ENCODE measurements at regions of chr19 and their contacts with region 1.

Region 1: DNA sequence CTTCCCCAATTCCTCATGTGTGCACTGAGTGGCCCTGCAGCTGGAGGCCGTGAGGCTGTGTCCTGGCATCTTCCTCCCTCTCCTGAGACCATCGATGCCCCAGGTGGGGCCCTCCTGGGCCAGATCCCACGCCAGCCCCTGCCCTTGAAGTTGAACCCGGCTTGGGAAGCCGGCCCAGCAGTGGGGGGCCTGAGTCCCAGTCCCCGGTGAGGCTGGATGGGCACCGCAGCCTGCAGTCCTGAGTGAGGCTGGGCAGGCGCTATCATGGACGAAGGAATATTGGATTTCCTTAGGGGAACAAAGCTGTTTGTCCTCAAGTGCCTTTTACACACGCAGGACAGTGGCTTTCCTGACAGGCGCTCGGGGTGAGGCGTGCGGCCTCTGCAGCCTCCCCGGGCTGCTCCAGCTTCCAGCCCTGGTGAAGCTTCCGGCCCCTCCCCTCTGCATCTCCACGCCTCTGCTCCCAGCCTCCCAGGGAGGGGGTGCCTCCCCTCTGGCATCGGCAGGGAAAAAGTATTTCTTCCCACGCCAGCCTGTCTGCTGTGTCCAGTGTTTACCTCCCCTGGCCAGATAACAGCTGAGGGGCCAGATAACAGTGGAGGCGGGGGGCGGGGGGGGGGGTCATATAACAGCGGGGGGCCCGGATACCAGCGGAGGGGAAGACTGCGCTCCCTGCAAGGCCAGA is 159.5 kb downstream of the KDM4B start:
- DNase-seq: no peak
- ATAC-seq: no peak
- H3K4me3 ChIP-seq: peak overlapping the region in 4 of 5 experiments; percentile 31 to 53 (median 34)
- H3K4me3 Mint-ChIP-seq: peak overlapping the region; percentile 84
- H3K27ac ChIP-seq: peak overlapping the region; percentile 100
- H3K27ac Mint-ChIP-seq: peak overlapping the region; percentile 97
- H3K4me1 ChIP-seq: peaks cover 72 to 85% of the 10 kb centered on the region in 2 donors
- H3K4me1 Mint-ChIP-seq: peaks cover 80% of the 10 kb centered on the region
- H3K27me3 ChIP-seq: no peaks in the 10 kb centered on the region
- H3K27me3 Mint-ChIP-seq: no peaks in the 10 kb centered on the region
- CTCF ChIP-seq: no peak

Region 2: GRCh38 chr19:5018224-5019015 is 110.0 kb before region 1 on chr19:
- CTCF ChIA-PET with region 1: no interaction called
- POLR2A ChIA-PET with region 1: no interaction called
- intact Hi-C with region 1: no loop called
- DNase-seq: no peak
- ATAC-seq: no peak
- H3K4me3 ChIP-seq: no peak overlapping the region
- H3K4me3 Mint-ChIP-seq: no peak overlapping the region
- H3K27ac ChIP-seq: no peak overlapping the region
- H3K27ac Mint-ChIP-seq: no peak overlapping the region
- H3K4me1 ChIP-seq: no peaks in the 10 kb centered on the region
- H3K4me1 Mint-ChIP-seq: peaks cover 5% of the 10 kb centered on the region
- H3K27me3 ChIP-seq: no peaks in the 10 kb centered on the region
- H3K27me3 Mint-ChIP-seq: no peaks in the 10 kb centered on the region
- CTCF ChIP-seq: no peak

Region 3: DNA sequence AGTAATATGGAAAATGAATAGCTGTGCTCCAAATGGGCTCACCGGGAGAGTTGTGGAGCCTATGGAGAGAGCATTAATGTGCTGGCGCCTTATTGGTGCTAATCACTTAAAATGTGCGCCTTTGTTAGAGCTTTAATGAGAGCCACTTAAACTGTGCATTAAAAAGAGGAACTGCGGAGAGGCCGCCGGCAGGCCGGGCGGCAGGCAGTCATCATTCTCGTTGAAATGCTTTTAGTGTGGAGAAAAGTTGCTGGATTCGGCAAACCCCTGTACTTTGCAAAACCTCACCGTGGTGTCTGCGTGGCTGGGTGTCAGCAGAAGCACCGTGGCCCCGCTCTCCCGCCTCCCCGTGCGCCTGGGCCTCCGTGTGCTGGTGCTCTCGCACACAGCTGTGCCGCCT is 54.0 kb before region 1 on chr19:
- CTCF ChIA-PET with region 1: interaction called, 3 read pairs
- POLR2A ChIA-PET with region 1: interaction called, 6 read pairs
- intact Hi-C with region 1: loop called (anchors 1 kb)
- DNase-seq: peak; percentile 64
- ATAC-seq: peak; percentile 53
- H3K4me3 ChIP-seq: peak overlapping the region in 1 of 5 experiments; percentile 9
- H3K4me3 Mint-ChIP-seq: peak overlapping the region; percentile 63
- H3K27ac ChIP-seq: peak overlapping the region; percentile 36 to 46
- H3K27ac Mint-ChIP-seq: peak overlapping the region; percentile 78
- H3K4me1 ChIP-seq: peaks cover 24 to 67% of the 10 kb centered on the region in 2 donors
- H3K4me1 Mint-ChIP-seq: peaks cover 38% of the 10 kb centered on the region
- H3K27me3 ChIP-seq: no peaks in the 10 kb centered on the region
- H3K27me3 Mint-ChIP-seq: no peaks in the 10 kb centered on the region
- CTCF ChIP-seq: no peak

Region 4: DNA sequence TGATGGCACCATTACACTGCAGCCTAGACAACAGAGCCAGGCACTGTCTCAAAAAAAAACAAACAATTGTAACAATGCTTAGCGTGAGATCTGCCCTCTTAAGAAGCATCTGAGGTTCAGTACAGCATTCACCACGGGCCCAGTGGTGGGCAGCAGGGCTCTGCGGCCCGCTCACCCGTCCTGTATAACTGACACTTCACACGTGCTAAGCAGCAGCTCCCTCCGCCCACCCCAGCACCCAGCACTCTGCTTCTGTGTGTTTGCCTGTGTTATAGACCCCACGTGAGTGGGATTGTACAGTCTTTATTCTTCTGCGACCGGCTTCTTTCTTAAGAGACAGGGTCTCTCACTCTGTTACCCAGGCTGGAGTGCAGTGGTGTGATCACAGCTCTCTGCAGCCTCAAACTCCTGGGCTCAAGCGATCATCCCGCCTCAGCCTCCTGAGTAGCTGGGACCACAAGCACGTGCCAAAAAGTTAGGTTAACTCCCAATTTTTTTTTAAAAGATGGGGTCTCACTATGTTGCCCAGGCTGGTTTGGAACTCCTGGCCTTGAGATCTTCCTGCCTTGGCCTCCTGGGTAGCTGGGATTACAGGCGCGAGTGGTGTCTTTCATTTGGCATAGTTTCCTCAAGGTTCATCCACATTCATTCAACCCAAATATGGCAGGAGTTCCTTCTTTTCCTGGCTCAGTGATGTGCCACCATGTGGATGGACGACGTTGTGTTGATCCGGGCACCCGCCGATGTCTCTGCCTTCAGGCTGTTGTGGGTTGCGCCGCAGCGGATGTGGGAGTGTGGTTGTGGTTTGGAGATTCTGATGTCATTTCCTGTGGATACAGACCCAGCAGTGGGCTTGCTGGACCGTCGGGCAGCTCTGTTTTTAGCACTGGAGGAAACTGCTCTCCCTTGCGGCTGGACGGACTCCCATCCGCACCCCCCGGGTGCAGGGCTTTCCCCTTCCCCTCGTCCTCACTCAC is 10.5 kb after region 1 on chr19:
- CTCF ChIA-PET with region 1: interaction called, 14 read pairs
- POLR2A ChIA-PET with region 1: interaction called, 10 read pairs
- intact Hi-C with region 1: loop called (anchors 1 kb)
- DNase-seq: peak; percentile 90
- ATAC-seq: peak; percentile 68
- H3K4me3 ChIP-seq: peak overlapping the region in 4 of 5 experiments; percentile 1 to 40 (median 20)
- H3K4me3 Mint-ChIP-seq: peak overlapping the region; percentile 85
- H3K27ac ChIP-seq: peak overlapping the region; percentile 59 to 63
- H3K27ac Mint-ChIP-seq: peak overlapping the region; percentile 97
- H3K4me1 ChIP-seq: peaks cover 70 to 99% of the 10 kb centered on the region in 2 donors
- H3K4me1 Mint-ChIP-seq: peaks cover 75% of the 10 kb centered on the region
- H3K27me3 ChIP-seq: no peaks in the 10 kb centered on the region
- H3K27me3 Mint-ChIP-seq: no peaks in the 10 kb centered on the region
- CTCF ChIP-seq: peak; percentile 13